ENCODE measurements at regions of chr17 and their contacts with region 1.

Region 1: DNA sequence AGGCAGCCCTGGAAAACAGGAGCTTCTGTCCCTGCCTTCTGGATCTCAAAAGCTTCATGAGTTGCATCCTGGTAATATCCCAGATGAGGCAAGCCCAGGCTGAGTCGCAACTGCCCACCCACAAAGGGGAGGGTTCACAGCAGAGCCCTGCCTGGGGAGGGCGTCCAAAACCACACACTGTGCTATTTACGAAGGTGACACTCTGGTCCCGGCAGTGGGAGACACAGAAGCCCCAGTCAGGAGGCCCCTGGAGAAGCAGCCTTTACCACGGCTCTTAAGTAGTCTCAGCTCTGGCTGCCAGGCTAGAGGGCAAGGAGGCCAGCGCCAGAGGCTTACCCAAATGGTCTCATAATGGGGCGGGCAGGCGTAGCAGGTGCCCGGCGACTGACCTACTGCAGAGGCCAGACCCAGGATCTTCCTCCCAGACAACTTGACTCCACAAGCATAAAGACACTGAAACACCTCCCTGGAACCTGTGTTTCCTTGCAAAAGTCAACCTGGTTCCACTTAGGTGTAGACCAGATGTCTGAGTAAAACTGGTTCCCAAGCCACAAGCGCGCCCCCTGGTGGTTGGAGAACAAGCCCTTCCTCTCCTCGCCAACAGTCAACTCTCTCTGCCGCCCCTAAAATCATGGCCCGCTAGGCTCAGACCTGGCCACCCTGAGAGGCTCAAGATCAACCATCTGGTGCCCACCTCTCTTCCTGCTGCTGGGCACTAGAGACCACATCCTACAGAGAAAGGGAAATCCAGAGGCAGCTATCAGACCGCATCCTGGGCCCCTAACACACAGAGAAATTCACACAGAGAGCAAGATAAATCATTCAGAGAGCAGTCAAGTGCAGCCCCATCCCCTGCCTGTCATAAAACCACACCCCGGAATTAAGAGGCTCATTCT is 5.2 kb downstream of the AXIN2 start:
- H3K4me3 ChIP-seq: no peak overlapping the region
- H3K27ac ChIP-seq: no peak overlapping the region
- H3K4me1 ChIP-seq: peaks cover 23% of the 10 kb centered on the region
- CTCF ChIP-seq: peak; percentile 86

Region 2: DNA sequence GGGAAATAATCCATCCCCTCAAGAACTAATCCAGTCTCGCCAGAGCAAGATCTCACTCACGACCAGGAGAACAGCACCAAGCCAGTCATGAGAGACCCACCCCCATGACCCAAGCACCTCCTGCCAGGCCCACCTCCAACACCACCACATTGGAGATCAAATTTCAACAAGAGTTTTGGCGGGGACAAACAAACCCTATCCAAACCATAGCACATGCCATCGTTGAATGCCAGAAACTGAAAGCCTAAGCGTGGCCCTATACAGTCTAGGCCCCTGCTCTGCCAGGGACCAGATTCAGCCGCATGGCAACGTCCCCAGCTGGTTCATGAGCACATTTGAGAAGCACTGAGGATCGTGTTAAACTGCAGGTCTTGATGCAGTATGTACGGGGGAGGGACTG is 52.1 kb before region 1 on chr17:
- CTCF ChIA-PET with region 1: no interaction called
- POLR2A ChIA-PET with region 1: no interaction called
- H3K4me3 ChIP-seq: no peak overlapping the region
- H3K27ac ChIP-seq: no peak overlapping the region
- H3K4me1 ChIP-seq: no peaks in the 10 kb centered on the region
- CTCF ChIP-seq: no peak

Region 3: DNA sequence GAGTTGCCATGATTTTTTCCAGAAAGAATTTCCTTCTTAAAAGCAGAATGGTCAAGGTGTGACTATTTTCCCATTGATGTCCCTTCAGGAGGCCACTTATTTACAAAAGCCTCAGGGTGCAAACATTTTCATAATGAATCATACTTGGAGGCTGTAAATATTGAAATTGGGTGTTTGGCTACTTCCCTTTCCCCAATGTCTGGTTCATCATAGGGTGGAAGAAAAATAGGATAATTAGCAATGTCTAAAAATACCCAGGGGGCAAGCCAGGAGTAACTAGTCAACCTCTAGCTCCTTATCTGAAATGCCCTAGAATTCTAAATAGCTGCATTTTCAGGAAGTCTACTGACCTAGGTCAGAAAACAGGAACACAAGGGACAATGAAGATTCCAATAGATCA is 13.6 kb before region 1 on chr17:
- CTCF ChIA-PET with region 1: interaction called, 14 read pairs
- POLR2A ChIA-PET with region 1: no interaction called
- H3K4me3 ChIP-seq: no peak overlapping the region
- H3K27ac ChIP-seq: no peak overlapping the region
- H3K4me1 ChIP-seq: no peaks in the 10 kb centered on the region
- CTCF ChIP-seq: no peak

Region 4: DNA sequence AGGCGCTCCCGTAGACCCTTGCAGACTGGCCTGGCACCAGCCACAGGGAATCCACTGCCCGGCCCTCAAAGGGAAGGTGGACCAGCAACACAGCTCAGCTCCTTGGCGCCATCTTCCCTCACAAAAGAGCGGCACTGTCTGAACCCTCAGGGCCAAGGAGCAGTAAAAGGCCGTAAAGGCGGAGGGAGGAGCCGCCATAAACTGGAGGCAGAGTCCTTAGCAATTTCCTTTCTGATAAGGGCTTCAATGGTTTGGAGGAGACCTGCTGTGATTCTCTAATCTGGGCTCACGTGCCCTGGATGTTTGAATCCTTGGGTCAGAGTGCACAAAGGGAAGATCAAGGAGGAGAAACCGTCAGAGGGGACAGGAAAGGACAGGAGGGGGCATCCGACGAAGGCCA is 20.7 kb after region 1 on chr17:
- CTCF ChIA-PET with region 1: no interaction called
- POLR2A ChIA-PET with region 1: no interaction called
- H3K4me3 ChIP-seq: no peak overlapping the region
- H3K27ac ChIP-seq: no peak overlapping the region
- H3K4me1 ChIP-seq: no peaks in the 10 kb centered on the region
- CTCF ChIP-seq: no peak

Region 5: GRCh38 chr17:65601145-65601544 is 44.9 kb after region 1 on chr17:
- CTCF ChIA-PET with region 1: no interaction called
- POLR2A ChIA-PET with region 1: no interaction called
- H3K4me3 ChIP-seq: no peak overlapping the region
- H3K27ac ChIP-seq: no peak overlapping the region
- H3K4me1 ChIP-seq: no peaks in the 10 kb centered on the region
- CTCF ChIP-seq: no peak

Measured in HEK293 (cell line).